ENCODE measurements at regions of chr10 and their contacts with region 1.

Region 1: GRCh38 chr10:122298598-122299301 is 27.7 kb downstream of the BTBD16 start:
- DNase-seq: peak; percentile 50 to 85
- ATAC-seq: peak; percentile 84 to 94 (median 93)
- H3K4me3 ChIP-seq: no peak overlapping the region
- H3K4me3 Mint-ChIP-seq: no peak overlapping the region
- H3K27ac ChIP-seq: no peak overlapping the region
- H3K27ac Mint-ChIP-seq: no peak overlapping the region
- H3K4me1 ChIP-seq: peaks cover 28% of the 10 kb centered on the region
- H3K4me1 Mint-ChIP-seq: peaks cover 18 to 21% of the 10 kb centered on the region in 2 donors
- H3K27me3 ChIP-seq: no peaks in the 10 kb centered on the region
- H3K27me3 Mint-ChIP-seq: peaks cover 12 to 14% of the 10 kb centered on the region in 2 donors
- CTCF ChIP-seq: peak; percentile 89

Region 2: GRCh38 chr10:122089311-122090017 is 209.3 kb before region 1 on chr10:
- intact Hi-C with region 1: no loop called
- DNase-seq: no peak
- ATAC-seq: no peak
- H3K4me3 ChIP-seq: no peak overlapping the region
- H3K4me3 Mint-ChIP-seq: no peak overlapping the region
- H3K27ac ChIP-seq: no peak overlapping the region
- H3K27ac Mint-ChIP-seq: no peak overlapping the region
- H3K4me1 ChIP-seq: no peaks in the 10 kb centered on the region
- H3K4me1 Mint-ChIP-seq: no peaks in the 10 kb centered on the region
- H3K27me3 ChIP-seq: no peaks in the 10 kb centered on the region
- H3K27me3 Mint-ChIP-seq: peaks cover 0 to 20% of the 10 kb centered on the region in 2 donors
- CTCF ChIP-seq: no peak

Region 3: GRCh38 chr10:122342293-122343134 is 43.8 kb after region 1 on chr10:
- intact Hi-C with region 1: loop called (anchors 2 kb)
- DNase-seq: peak; percentile 39 to 81
- ATAC-seq: peak; percentile 57 to 82 (median 78)
- H3K4me3 ChIP-seq: no peak overlapping the region
- H3K4me3 Mint-ChIP-seq: no peak overlapping the region
- H3K27ac ChIP-seq: no peak overlapping the region
- H3K27ac Mint-ChIP-seq: no peak overlapping the region
- H3K4me1 ChIP-seq: no peaks in the 10 kb centered on the region
- H3K4me1 Mint-ChIP-seq: peaks cover 7 to 19% of the 10 kb centered on the region in 2 donors
- H3K27me3 ChIP-seq: no peaks in the 10 kb centered on the region
- H3K27me3 Mint-ChIP-seq: no peaks in the 10 kb centered on the region
- CTCF ChIP-seq: peak; percentile 85

Region 4: GRCh38 chr10:122435212-122435827 is 136.6 kb after region 1 on chr10:
- intact Hi-C with region 1: loop called (anchors 1 kb)
- DNase-seq: peak in 1 of 2 donors; percentile 78
- ATAC-seq: peak; percentile 42 to 67 (median 58)
- H3K4me3 ChIP-seq: no peak overlapping the region
- H3K4me3 Mint-ChIP-seq: no peak overlapping the region
- H3K27ac ChIP-seq: no peak overlapping the region
- H3K27ac Mint-ChIP-seq: no peak overlapping the region
- H3K4me1 ChIP-seq: no peaks in the 10 kb centered on the region
- H3K4me1 Mint-ChIP-seq: peaks cover 0 to 7% of the 10 kb centered on the region in 2 donors
- H3K27me3 ChIP-seq: no peaks in the 10 kb centered on the region
- H3K27me3 Mint-ChIP-seq: no peaks in the 10 kb centered on the region
- CTCF ChIP-seq: peak; percentile 89

Region 5: DNA sequence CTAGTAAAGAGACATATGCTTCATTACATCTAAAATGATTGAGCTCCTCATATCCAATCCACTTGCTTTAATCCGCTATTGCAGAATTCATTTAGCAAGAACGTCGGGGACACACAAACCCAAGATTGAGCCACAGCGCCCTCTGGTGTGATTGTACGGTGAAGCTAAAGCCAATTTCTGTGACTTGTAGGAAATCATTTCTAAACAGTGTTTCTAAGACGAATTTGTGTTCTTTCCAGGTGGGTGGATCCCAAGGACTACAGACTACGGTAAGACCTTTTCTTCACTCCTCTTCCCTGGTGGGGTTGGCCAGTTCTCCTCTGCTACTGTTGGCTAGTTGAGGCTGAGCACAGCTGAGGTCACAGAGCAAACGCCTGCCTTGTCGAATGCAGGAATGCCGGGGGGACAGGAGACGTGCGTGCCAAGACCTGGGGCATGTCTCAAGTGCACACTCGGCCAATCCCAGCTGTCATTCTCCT is 267.0 kb after region 1 on chr10:
- intact Hi-C with region 1: loop called (anchors 1 kb)
- DNase-seq: peak; percentile 46 to 87
- ATAC-seq: peak in 1 of 3 donors; percentile 61
- H3K4me3 ChIP-seq: no peak overlapping the region
- H3K4me3 Mint-ChIP-seq: no peak overlapping the region
- H3K27ac ChIP-seq: no peak overlapping the region
- H3K27ac Mint-ChIP-seq: no peak overlapping the region
- H3K4me1 ChIP-seq: no peaks in the 10 kb centered on the region
- H3K4me1 Mint-ChIP-seq: no peaks in the 10 kb centered on the region
- H3K27me3 ChIP-seq: no peaks in the 10 kb centered on the region
- H3K27me3 Mint-ChIP-seq: peaks cover 21 to 34% of the 10 kb centered on the region in 2 donors
- CTCF ChIP-seq: peak; percentile 66

Region 6: GRCh38 chr10:122703439-122704118 is 404.8 kb after region 1 on chr10:
- intact Hi-C with region 1: loop called (anchors 2 kb)
- DNase-seq: peak in 1 of 2 donors; percentile 66
- ATAC-seq: peak in 1 of 3 donors; percentile 70
- H3K4me3 ChIP-seq: no peak overlapping the region
- H3K4me3 Mint-ChIP-seq: no peak overlapping the region
- H3K27ac ChIP-seq: no peak overlapping the region
- H3K27ac Mint-ChIP-seq: no peak overlapping the region
- H3K4me1 ChIP-seq: no peaks in the 10 kb centered on the region
- H3K4me1 Mint-ChIP-seq: peaks cover 0 to 5% of the 10 kb centered on the region in 2 donors
- H3K27me3 ChIP-seq: no peaks in the 10 kb centered on the region
- H3K27me3 Mint-ChIP-seq: peaks cover 0 to 8% of the 10 kb centered on the region in 2 donors
- CTCF ChIP-seq: peak; percentile 55

Measured in natural killer cell (primary cell).